ENCODE measurements at regions of chr21 and their contacts with region 1.

Region 1: GRCh38 chr21:36747815-36748383 is 49.0 kb downstream of the SIM2 start:
- DNase-seq: peak; percentile 34
- ATAC-seq: peak; percentile 96
- H3K4me3 ChIP-seq: peak overlapping the region; percentile 55
- H3K27ac ChIP-seq: no peak overlapping the region; the same call in 1 of the 2 replicates
- H3K4me1 ChIP-seq: peaks cover 11% of the 10 kb centered on the region
- H3K27me3 ChIP-seq: peaks cover 2% of the 10 kb centered on the region
- CTCF ChIP-seq: peak; percentile 56
- POLR2A ChIP-seq: no peak
- RAD21 ChIP-seq: peak; percentile 55

Region 2: GRCh38 chr21:36847171-36847570 is 99.3 kb after region 1 on chr21:
- CTCF ChIA-PET with region 1: no interaction called
- POLR2A ChIA-PET with region 1: no interaction called
- dilution Hi-C with region 1: no loop called
- in situ Hi-C with region 1: no loop called
- intact Hi-C with region 1: loop called (anchors 2 kb)
- DNase-seq: peak; percentile 85
- ATAC-seq: peak; percentile 93
- H3K4me3 ChIP-seq: no peak overlapping the region
- H3K27ac ChIP-seq: no peak overlapping the region
- H3K4me1 ChIP-seq: peaks cover 10% of the 10 kb centered on the region
- H3K27me3 ChIP-seq: no peaks in the 10 kb centered on the region
- CTCF ChIP-seq: no peak
- POLR2A ChIP-seq: no peak
- RAD21 ChIP-seq: no peak

Region 3: GRCh38 chr21:36910581-36911307 is 162.8 kb after region 1 on chr21:
- CTCF ChIA-PET with region 1: no interaction called
- POLR2A ChIA-PET with region 1: interaction called, 11 read pairs
- dilution Hi-C with region 1: no loop called
- in situ Hi-C with region 1: no loop called
- intact Hi-C with region 1: no loop called
- DNase-seq: peak; percentile 81
- ATAC-seq: peak; percentile 50
- H3K4me3 ChIP-seq: no peak overlapping the region
- H3K27ac ChIP-seq: peak overlapping the region; percentile 99
- H3K4me1 ChIP-seq: peaks cover 16% of the 10 kb centered on the region
- H3K27me3 ChIP-seq: no peaks in the 10 kb centered on the region
- CTCF ChIP-seq: no peak
- POLR2A ChIP-seq: no peak
- RAD21 ChIP-seq: no peak

Measured in IMR-90 (cell line).